HEK293 (cell line): ENCODE measurements at regions of chr20 and their contacts with region 1.

Region 1: GRCh38 chr20:33262658-33263065 is 20.4 kb upstream of the BPIFB1 start:
- H3K4me3 ChIP-seq: no peak overlapping the region
- H3K27ac ChIP-seq: no peak overlapping the region
- H3K4me1 ChIP-seq: no peaks in the 10 kb centered on the region
- CTCF ChIP-seq: 0 out of 2 replicates have a peak, but pooled peaks have one; percentile 20

Region 2: GRCh38 chr20:33178726-33179125 is 83.9 kb before region 1 on chr20:
- CTCF ChIA-PET with region 1: no interaction called
- POLR2A ChIA-PET with region 1: no interaction called
- H3K4me3 ChIP-seq: no peak overlapping the region
- H3K27ac ChIP-seq: no peak overlapping the region
- H3K4me1 ChIP-seq: no peaks in the 10 kb centered on the region
- CTCF ChIP-seq: no peak

Region 3: DNA sequence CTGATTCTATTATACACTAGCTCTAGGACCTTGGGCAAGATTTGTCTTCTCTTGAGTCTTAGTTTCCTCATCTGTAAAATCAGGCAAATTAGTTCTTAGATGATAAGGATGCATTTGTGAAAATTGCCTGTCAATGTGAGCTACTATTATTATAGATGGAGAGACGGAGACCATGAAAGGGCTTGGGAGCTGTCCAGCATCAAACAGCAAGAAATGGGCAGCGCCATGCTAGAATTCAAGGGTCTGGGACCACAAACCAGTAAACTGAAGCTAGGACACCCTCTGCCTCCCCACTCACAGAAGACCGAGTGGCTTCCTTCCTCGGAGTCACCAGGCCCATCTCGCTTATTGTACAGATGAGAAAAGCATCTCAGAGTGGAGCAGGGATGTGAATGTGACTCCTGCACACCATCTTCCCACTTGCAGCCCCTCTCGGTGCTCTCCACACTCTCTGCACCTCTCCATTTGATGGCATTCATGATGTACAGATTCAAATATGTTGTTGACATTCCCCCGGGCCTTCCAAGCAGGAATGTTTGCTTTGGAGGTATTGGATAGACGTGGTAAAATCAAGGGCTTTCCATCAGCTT is 69.7 kb before region 1 on chr20:
- CTCF ChIA-PET with region 1: no interaction called
- POLR2A ChIA-PET with region 1: no interaction called
- H3K4me3 ChIP-seq: no peak overlapping the region
- H3K27ac ChIP-seq: no peak overlapping the region
- H3K4me1 ChIP-seq: no peaks in the 10 kb centered on the region
- CTCF ChIP-seq: no peak

Region 4: GRCh38 chr20:33273117-33273851 is 10.6 kb after region 1 on chr20:
- CTCF ChIA-PET with region 1: interaction called, 12 read pairs
- POLR2A ChIA-PET with region 1: no interaction called
- H3K4me3 ChIP-seq: no peak overlapping the region
- H3K27ac ChIP-seq: no peak overlapping the region
- H3K4me1 ChIP-seq: no peaks in the 10 kb centered on the region
- CTCF ChIP-seq: no peak

Region 5: GRCh38 chr20:33285861-33286495 is 23.3 kb after region 1 on chr20:
- CTCF ChIA-PET with region 1: interaction called, 73 read pairs
- POLR2A ChIA-PET with region 1: no interaction called
- H3K4me3 ChIP-seq: no peak overlapping the region
- H3K27ac ChIP-seq: no peak overlapping the region
- H3K4me1 ChIP-seq: no peaks in the 10 kb centered on the region
- CTCF ChIP-seq: no peak

Region 6: GRCh38 chr20:33291830-33292355 is 29.2 kb after region 1 on chr20:
- CTCF ChIA-PET with region 1: interaction called, 73 read pairs
- POLR2A ChIA-PET with region 1: no interaction called
- H3K4me3 ChIP-seq: no peak overlapping the region
- H3K27ac ChIP-seq: no peak overlapping the region
- H3K4me1 ChIP-seq: no peaks in the 10 kb centered on the region
- CTCF ChIP-seq: peak; percentile 60; the same call in 1 of the 2 replicates

Region 7: GRCh38 chr20:33299111-33299603 is 36.5 kb after region 1 on chr20:
- CTCF ChIA-PET with region 1: interaction called, 73 read pairs
- POLR2A ChIA-PET with region 1: no interaction called
- H3K4me3 ChIP-seq: no peak overlapping the region
- H3K27ac ChIP-seq: no peak overlapping the region
- H3K4me1 ChIP-seq: no peaks in the 10 kb centered on the region
- CTCF ChIP-seq: peak; percentile 88